Sigmoid colon (tissue), 7 donors: ENCODE measurements at regions of chr14 and their contacts with region 1.

Region 1: DNA sequence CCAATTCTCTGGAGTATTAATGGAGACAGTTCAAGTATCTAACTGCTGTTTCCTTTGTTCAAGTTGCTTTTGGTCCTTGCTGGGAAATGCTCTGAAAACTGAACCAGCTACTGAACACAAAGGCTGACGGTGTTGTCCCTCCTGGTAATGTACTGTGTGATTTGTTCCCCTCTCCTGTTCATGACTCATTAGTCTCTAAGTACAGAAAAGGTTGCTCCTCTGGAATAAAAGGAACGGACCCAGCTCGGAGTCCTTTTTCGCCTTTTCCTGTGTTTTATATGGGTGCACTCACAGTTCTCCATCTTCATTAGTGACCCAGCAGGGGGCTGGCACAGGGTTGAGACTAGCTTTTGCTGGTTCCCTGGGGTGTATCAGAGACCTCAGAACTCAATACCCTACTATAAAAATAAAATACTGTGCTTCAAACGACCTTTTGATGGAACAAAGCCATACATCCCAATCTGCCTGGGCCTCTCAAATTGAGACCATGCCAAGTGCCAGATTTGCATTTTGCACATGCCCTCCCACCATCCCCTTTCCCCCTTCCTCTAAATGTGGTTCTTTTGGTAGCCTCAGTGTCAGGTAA is 269.7 kb downstream of the RAD51B start:
- DNase-seq: peak; percentile 71
- H3K4me3 ChIP-seq: peak overlapping the region in 2 of 4 donors; percentile 36 to 37
- H3K27ac ChIP-seq: peak overlapping the region; percentile 15 to 85 (median 78)
- H3K4me1 ChIP-seq: peaks cover 0 to 24% (median 14%) of the 10 kb centered on the region in 4 donors
- H3K27me3 ChIP-seq: no peaks in the 10 kb centered on the region
- CTCF ChIP-seq: no peak
- EP300 ChIP-seq: no peak
- POLR2A ChIP-seq: no peak

Region 2: GRCh38 chr14:67908052-67908754 is 181.0 kb before region 1 on chr14:
- intact Hi-C with region 1: no loop called
- DNase-seq: no peak
- H3K4me3 ChIP-seq: no peak overlapping the region
- H3K27ac ChIP-seq: no peak overlapping the region
- H3K4me1 ChIP-seq: no peaks in the 10 kb centered on the region
- H3K27me3 ChIP-seq: no peaks in the 10 kb centered on the region
- CTCF ChIP-seq: no peak
- EP300 ChIP-seq: no peak
- POLR2A ChIP-seq: no peak

Region 3: DNA sequence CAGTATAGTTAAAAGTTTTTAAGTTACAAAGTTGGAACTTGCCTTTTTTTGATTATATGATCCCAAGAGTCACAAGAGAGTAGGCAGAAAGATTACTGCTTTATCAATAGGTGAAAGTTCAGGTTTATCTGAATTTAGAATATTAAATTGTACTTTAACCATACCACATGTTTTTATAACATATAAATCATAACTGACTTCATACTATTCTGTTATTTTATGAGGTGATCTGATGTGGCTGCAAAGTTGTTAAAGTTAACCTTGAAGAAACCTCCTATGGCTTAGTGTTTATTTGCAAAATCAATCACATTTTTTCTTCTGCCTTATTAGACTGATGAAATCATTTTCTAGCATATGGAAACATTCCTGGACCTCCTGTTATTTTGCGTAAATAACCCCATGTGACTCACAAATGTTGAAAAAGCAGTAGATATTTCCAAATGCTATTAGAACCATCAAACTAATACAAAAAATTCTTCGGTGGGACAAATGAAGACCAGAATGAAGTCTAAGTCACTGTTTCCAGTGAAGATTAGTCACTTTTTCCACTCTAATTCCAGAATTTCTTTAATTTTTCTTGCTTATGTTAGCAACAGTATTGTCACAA is 137.6 kb before region 1 on chr14:
- intact Hi-C with region 1: loop called (anchors 5 kb)
- DNase-seq: no peak
- H3K4me3 ChIP-seq: no peak overlapping the region
- H3K27ac ChIP-seq: peak overlapping the region in 3 of 4 donors; percentile 11 to 56 (median 53)
- H3K4me1 ChIP-seq: peaks cover 0 to 24% (median 14%) of the 10 kb centered on the region in 4 donors
- H3K27me3 ChIP-seq: no peaks in the 10 kb centered on the region
- CTCF ChIP-seq: no peak
- EP300 ChIP-seq: no peak
- POLR2A ChIP-seq: no peak

Region 4: DNA sequence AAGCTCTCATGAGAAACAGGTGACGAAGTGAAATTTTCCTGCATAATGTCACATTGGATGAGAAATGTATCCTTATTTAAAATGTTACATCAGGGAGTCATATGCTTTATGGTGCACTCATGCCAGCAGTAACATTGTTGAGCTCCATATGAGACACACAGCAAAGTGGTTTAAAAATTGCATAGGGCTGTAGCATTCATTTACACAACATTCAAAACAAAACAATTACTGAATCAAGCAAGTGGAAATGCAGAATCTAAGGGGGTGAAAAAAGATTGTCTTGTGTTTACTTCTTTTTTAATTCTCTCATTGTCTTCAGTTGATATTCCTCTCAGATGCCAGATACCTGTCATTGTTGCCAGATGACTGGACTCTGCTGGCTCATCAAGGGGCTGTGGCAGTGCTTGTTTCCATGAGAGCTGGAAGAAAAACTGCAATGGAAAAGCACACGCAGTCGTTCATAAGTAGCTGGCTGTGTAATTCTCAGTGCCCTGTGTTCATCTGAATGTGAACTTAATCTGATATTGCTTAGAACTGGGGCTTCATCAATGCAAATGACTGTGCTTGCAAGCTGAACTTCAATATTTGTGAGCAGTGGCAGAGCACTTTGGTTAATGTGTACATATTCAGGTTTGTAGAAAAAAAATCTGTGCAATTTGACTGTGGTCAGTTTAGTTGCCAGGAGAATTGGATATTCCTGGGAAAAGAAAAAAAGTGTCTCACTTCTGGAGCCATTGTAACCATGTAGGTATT is 35.9 kb after region 1 on chr14:
- intact Hi-C with region 1: no loop called
- DNase-seq: no peak
- H3K4me3 ChIP-seq: no peak overlapping the region
- H3K27ac ChIP-seq: peak overlapping the region; percentile 60 to 80 (median 72)
- H3K4me1 ChIP-seq: peaks cover 0 to 38% (median 25%) of the 10 kb centered on the region in 4 donors
- H3K27me3 ChIP-seq: no peaks in the 10 kb centered on the region
- CTCF ChIP-seq: no peak
- EP300 ChIP-seq: peak in 1 of 4 donors; percentile 63
- POLR2A ChIP-seq: no peak